ENCODE measurements at regions of chr19 and their contacts with region 1.

Region 1: GRCh38 chr19:48239580-48240141 is 16.1 kb downstream of the CARD8 start:
- DNase-seq: peak; percentile 42
- H3K4me3 ChIP-seq: no peak overlapping the region
- H3K27ac ChIP-seq: no peak overlapping the region
- H3K4me1 ChIP-seq: no peaks in the 10 kb centered on the region
- H3K27me3 ChIP-seq: no peaks in the 10 kb centered on the region
- CTCF ChIP-seq: no peak

Region 2: GRCh38 chr19:48102870-48103751 is 136.6 kb before region 1 on chr19:
- CTCF ChIA-PET with region 1: no interaction called
- dilution Hi-C with region 1: no loop called
- in situ Hi-C with region 1: no loop called
- intact Hi-C with region 1: no loop called
- DNase-seq: peak; percentile 66
- H3K4me3 ChIP-seq: no peak overlapping the region
- H3K27ac ChIP-seq: no peak overlapping the region
- H3K4me1 ChIP-seq: peaks cover 4% of the 10 kb centered on the region
- H3K27me3 ChIP-seq: no peaks in the 10 kb centered on the region
- CTCF ChIP-seq: peak; percentile 74 to 77

Region 3: GRCh38 chr19:48203732-48204628 is 35.7 kb before region 1 on chr19:
- CTCF ChIA-PET with region 1: no interaction called
- dilution Hi-C with region 1: loop called (anchors 5 kb)
- in situ Hi-C with region 1: no loop called
- intact Hi-C with region 1: no loop called
- DNase-seq: peak; percentile 98
- H3K4me3 ChIP-seq: peak overlapping the region; percentile 55 to 76 (median 73)
- H3K27ac ChIP-seq: peak overlapping the region; percentile 86
- H3K4me1 ChIP-seq: peaks cover 14% of the 10 kb centered on the region
- H3K27me3 ChIP-seq: no peaks in the 10 kb centered on the region
- CTCF ChIP-seq: no peak

Region 4: GRCh38 chr19:48321622-48322591 is 82.2 kb after region 1 on chr19:
- CTCF ChIA-PET with region 1: no interaction called
- dilution Hi-C with region 1: no loop called
- in situ Hi-C with region 1: no loop called
- intact Hi-C with region 1: no loop called
- DNase-seq: peak; percentile 99
- H3K4me3 ChIP-seq: peak overlapping the region; percentile 57 to 76 (median 63)
- H3K27ac ChIP-seq: peak overlapping the region; percentile 96
- H3K4me1 ChIP-seq: peaks cover 30% of the 10 kb centered on the region
- H3K27me3 ChIP-seq: no peaks in the 10 kb centered on the region
- CTCF ChIP-seq: peak in 1 of 2 donors; percentile 29

Measured in mammary epithelial cell (primary cell).